Activated T-helper 2 cell treated with anti-CD3 and anti-CD28 coated beads, Interferon-gamma antibody, Interleukin-2, Interleukin-4, amounts not matched to agents 10 μg/mL and 5 μg/mL and 100 μg/mL, durations not matched to agents 14 hours and 24 hours and 36 hours (primary cell): ENCODE measurements at regions of chr2 and their contacts with region 1.

Region 1: GRCh38 chr2:3558205-3559014 is at the start of gene RNASEH1:
- DNase-seq: peak; percentile 97
- H3K4me3 Mint-ChIP-seq: peak within 1 kb of the TSS; percentile 91
- H3K27ac Mint-ChIP-seq: peak within 1 kb of the TSS; percentile 94
- H3K4me1 Mint-ChIP-seq: peaks cover 20% of the 10 kb centered on the region
- H3K27me3 Mint-ChIP-seq: no peaks in the 10 kb centered on the region
- total RNA-seq, gene RNASEH1: 29.0 and 30.3 TPM in 2 replicates

Region 2: DNA sequence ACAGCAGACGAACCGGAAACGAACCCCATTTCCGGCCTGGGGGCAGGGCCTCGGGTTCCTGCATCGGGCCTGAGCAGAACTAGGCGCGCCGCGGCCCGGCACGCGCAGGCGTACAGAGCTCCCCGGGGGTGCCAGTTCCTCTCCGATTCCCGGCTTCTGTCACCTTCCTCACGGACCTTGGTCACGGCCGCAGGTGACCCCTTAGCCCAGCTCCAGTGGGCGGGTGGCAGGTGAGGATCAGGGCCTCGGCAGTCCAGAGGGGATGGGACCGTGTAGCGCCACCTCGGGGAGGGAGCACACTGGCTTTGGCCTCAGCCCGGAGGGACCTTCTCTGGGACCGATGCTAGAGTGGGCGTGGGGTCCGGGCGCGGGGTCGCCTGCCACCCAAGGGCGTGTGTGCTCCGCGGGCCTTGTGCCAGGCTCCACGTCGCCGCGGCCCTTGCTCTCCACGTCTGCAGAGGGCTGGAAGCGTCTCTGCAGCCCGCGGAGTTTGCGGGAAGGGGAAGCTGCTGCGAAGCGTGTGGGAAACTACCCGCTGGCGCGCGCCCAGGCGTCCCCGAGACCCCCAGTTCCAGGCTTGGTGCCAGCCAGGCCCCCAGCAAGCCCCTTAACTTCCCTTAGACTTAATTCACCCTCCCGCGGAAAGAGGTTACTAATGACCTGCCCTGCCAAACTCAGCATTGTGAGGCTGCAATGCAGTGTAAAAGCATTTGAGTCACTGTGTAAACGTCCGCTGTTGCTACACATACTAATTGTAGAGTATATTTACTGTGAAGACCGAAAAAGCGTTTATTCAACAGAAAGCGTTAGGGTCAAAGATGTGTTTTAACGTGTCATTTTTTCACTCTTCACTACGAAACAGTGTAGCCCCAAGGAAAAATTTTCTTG is 178.5 kb before region 1 on chr2 and contains the start of gene TRAPPC12:
- intact Hi-C with region 1: loop called (anchors 1 kb)
- DNase-seq: peak; percentile 91
- H3K4me3 Mint-ChIP-seq: peak within 1 kb of the TSS; percentile 97
- H3K27ac Mint-ChIP-seq: peak within 1 kb of the TSS; percentile 97
- H3K4me1 Mint-ChIP-seq: peaks cover 33% of the 10 kb centered on the region
- H3K27me3 Mint-ChIP-seq: no peaks in the 10 kb centered on the region
- total RNA-seq, gene TRAPPC12: 84.6 and 87.1 TPM in 2 replicates

Region 3: DNA sequence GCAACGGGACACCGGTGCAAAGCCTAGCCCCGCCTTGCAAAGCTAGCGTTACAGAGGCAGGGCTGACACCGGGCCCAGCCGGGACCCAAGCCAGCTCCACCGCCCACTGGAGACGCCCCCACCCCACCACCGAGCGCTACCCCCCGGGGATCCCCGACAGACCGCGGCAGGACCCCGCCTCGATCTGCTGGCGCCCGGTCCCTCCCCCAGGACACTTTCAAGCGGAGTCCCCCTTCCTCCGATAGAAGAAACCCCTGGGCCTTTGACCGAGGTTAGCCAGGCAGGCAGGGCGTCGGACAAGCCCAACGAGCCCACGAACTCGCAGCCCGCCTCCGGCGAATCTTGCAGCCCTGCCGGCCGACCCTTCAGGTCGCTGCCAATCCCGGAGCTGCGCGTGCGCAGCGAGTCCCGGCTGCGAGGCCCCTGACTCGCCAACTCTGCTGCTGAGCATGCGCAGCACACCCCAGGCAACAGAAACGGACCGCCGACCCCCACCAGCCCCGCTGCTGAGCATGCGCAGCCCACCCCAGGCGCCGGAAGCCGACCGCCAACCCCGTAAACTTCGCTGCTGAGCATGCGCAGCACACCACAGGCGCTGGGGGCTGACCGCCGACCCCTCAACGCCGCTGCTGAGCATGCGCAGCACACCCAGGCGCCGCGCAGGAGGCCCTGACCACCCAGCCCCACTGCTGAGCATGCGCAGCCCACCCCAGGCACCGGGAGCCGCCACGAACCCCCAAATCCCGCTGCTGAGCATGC is 39.7 kb before region 1 on chr2:
- intact Hi-C with region 1: loop called (anchors 1 kb)
- DNase-seq: peak; percentile 98
- H3K4me3 Mint-ChIP-seq: peak overlapping the region; percentile 91
- H3K27ac Mint-ChIP-seq: peak overlapping the region; percentile 78
- H3K4me1 Mint-ChIP-seq: peaks cover 31% of the 10 kb centered on the region
- H3K27me3 Mint-ChIP-seq: no peaks in the 10 kb centered on the region

Region 4: GRCh38 chr2:3575534-3576262 is 17.3 kb after region 1 on chr2:
- intact Hi-C with region 1: loop called (anchors 1 kb)
- DNase-seq: peak; percentile 27
- H3K4me3 Mint-ChIP-seq: peak overlapping the region; percentile 93
- H3K27ac Mint-ChIP-seq: peak overlapping the region; percentile 90
- H3K4me1 Mint-ChIP-seq: peaks cover 34% of the 10 kb centered on the region
- H3K27me3 Mint-ChIP-seq: no peaks in the 10 kb centered on the region

Region 5: DNA sequence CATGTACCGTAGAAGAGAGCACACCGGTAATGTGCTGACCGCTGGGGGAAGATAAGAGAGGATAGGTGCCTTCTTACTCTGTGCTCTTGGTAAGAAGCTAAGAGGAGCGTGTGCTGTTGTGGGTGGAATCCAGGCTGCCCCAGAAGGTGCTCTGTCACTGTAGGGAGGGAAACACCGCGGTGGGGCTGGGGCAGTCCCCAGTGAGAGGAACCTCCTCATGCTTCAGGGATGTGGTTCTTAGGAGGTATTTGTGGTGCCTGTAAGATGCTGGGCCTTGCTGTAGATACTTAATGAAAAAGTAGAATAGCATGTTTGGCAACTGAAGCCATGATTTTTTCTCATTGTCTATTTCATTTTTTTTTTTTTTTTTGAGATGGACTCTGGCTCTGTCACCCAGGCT is 37.6 kb after region 1 on chr2:
- intact Hi-C with region 1: loop called (anchors 2 kb)
- DNase-seq: no peak
- H3K4me3 Mint-ChIP-seq: no peak overlapping the region
- H3K27ac Mint-ChIP-seq: no peak overlapping the region
- H3K4me1 Mint-ChIP-seq: peaks cover 10% of the 10 kb centered on the region
- H3K27me3 Mint-ChIP-seq: peaks cover 10% of the 10 kb centered on the region

Region 6: GRCh38 chr2:3604991-3605961 is 46.9 kb after region 1 on chr2:
- intact Hi-C with region 1: loop called (anchors 1 kb)
- DNase-seq: no peak
- H3K4me3 Mint-ChIP-seq: peak overlapping the region; percentile 17
- H3K27ac Mint-ChIP-seq: peak overlapping the region; percentile 46
- H3K4me1 Mint-ChIP-seq: peaks cover 2% of the 10 kb centered on the region
- H3K27me3 Mint-ChIP-seq: no peaks in the 10 kb centered on the region

Region 7: GRCh38 chr2:3651691-3652648 is 93.6 kb after region 1 on chr2:
- intact Hi-C with region 1: loop called (anchors 1 kb)
- DNase-seq: peak; percentile 66
- H3K4me3 Mint-ChIP-seq: peak overlapping the region; percentile 80
- H3K27ac Mint-ChIP-seq: peak overlapping the region; percentile 94
- H3K4me1 Mint-ChIP-seq: peaks cover 14% of the 10 kb centered on the region
- H3K27me3 Mint-ChIP-seq: no peaks in the 10 kb centered on the region

Region 8: GRCh38 chr2:3703753-3704355 is 145.4 kb after region 1 on chr2:
- intact Hi-C with region 1: no loop called
- DNase-seq: no peak
- H3K4me3 Mint-ChIP-seq: no peak overlapping the region
- H3K27ac Mint-ChIP-seq: no peak overlapping the region
- H3K4me1 Mint-ChIP-seq: no peaks in the 10 kb centered on the region
- H3K27me3 Mint-ChIP-seq: peaks cover 18% of the 10 kb centered on the region